Breast epithelium (tissue), 4 donors: ENCODE measurements at regions of chr17 and their contacts with region 1.

Region 1: GRCh38 chr17:78026381-78026780 is 67.9 kb downstream of the TNRC6C start:
- DNase-seq: no peak
- H3K4me3 ChIP-seq: no peak overlapping the region
- H3K27ac ChIP-seq: no peak overlapping the region
- H3K4me1 ChIP-seq: no peaks in the 10 kb centered on the region
- H3K27me3 ChIP-seq: no peaks in the 10 kb centered on the region
- CTCF ChIP-seq: no peak
- POLR2A ChIP-seq: no peak

Region 2: DNA sequence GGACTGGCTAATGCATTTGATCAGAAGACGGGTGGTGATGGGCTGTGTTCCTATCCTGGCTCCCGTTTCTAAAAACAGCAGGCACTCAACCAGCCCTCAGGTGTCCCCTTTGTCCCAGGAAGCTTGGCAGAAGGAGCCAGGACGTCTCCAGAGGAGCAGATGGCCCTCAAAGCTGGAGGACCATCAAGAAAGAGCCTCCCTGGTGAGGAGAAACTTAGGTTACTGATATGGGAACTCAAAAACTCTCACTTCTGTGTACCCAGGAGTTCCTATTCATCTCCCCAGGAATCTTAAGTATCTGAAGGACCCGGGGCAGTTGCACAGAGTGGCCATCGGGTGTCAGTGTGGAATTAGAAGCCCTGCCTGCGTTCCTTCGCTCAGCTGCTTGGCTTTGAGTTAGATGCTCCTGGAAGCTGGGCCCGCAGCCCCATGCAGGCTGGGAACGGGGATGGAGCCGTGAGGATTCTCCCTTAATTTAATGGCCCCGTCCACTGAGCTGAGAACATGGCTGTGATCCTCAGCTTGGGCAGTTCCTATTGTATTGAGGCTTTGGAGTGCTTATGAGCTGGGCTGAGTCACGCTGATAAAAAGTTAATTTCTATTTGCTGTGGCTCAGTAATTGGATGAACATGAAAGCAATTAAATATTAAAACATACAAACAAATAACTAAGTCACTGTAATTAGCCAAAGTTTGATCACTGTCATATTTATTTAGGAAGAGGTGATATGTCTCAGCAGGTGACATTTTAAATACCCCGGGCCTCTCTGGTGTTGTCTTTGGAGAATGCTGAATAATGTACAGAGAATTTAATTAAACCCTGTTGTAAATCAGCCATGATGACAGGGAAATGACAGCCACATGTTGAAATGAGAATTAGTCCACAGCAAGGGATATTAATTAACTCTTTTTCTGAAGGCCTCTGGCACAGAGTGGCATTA is 483.6 kb before region 1 on chr17:
- intact Hi-C with region 1: loop called (anchors 5 kb)
- DNase-seq: peak; percentile 78 to 79
- H3K4me3 ChIP-seq: no peak overlapping the region
- H3K27ac ChIP-seq: no peak overlapping the region
- H3K4me1 ChIP-seq: no peaks in the 10 kb centered on the region
- H3K27me3 ChIP-seq: no peaks in the 10 kb centered on the region
- CTCF ChIP-seq: peak; percentile 42 to 92 (median 90)
- POLR2A ChIP-seq: no peak

Region 3: DNA sequence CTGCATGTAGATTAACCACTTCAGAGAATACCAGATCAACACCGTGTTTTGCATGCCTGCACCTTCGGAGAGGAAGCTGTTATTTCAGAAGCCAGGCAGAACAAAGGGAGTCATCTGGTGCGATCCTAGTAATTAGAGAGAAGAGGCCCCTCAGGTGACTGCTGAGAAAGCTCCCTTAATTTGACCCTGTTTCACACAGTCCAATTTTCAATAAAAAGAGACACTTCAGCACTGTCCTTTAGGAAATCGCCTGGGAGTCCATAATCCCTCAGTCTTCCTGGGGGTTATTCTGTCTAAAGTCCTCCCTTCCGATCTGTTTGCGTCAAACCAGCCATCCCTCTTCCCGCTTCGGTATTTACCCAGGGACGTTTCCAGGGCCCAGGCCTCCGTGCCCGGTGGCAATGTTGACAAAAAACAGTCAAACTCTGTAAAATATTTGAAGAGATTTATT is 91.2 kb before region 1 on chr17:
- intact Hi-C with region 1: no loop called
- DNase-seq: no peak
- H3K4me3 ChIP-seq: no peak overlapping the region
- H3K27ac ChIP-seq: peak overlapping the region in 1 of 2 donors; percentile 4
- H3K4me1 ChIP-seq: no peaks in the 10 kb centered on the region
- H3K27me3 ChIP-seq: peaks cover 0 to 12% of the 10 kb centered on the region in 2 donors
- CTCF ChIP-seq: no peak
- POLR2A ChIP-seq: no peak

Region 4: DNA sequence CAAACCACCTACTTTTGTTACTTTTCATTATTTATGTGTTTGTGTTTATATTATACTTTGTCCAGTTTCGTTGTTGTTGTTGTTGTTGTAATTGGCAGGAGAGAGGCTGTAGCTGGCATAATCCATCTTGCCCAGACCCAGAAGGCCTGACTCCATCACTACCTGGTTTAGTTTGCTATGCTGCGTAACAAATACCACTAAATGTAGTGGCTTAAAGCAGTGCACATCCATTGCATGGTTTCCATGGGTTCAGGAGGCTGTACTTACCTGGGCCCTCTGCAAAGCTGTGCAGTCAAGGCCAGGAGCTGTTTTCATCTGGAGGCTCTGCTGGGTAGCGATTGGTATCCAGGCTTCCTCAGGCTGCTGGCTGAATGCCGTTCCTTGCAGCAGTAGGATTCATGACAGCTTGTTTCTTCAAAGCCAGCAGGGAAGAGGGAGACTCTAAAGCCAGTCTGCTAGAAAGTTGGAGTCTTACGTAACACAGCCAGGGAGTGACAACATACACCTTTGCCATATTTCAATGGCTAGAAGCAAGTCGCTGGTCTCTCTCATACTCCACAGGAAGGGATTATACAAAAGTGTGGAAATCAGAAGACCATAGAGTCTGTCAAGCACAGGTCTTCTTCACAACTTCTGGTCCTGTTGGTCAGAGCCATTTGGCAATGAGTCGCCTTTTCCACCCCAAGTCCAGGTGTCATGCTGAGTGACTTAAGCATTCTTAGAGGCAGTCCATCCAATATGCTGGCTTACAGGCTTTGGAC is 26.8 kb before region 1 on chr17:
- intact Hi-C with region 1: no loop called
- DNase-seq: no peak
- H3K4me3 ChIP-seq: no peak overlapping the region
- H3K27ac ChIP-seq: no peak overlapping the region
- H3K4me1 ChIP-seq: no peaks in the 10 kb centered on the region
- H3K27me3 ChIP-seq: no peaks in the 10 kb centered on the region
- CTCF ChIP-seq: no peak
- POLR2A ChIP-seq: no peak

Region 5: GRCh38 chr17:78063489-78063888 is 37.1 kb after region 1 on chr17:
- intact Hi-C with region 1: no loop called
- DNase-seq: no peak
- H3K4me3 ChIP-seq: no peak overlapping the region
- H3K27ac ChIP-seq: no peak overlapping the region
- H3K4me1 ChIP-seq: no peaks in the 10 kb centered on the region
- H3K27me3 ChIP-seq: no peaks in the 10 kb centered on the region
- CTCF ChIP-seq: no peak
- POLR2A ChIP-seq: no peak